Ascending aorta (tissue), 2 donors: ENCODE measurements at regions of chr15 and their contacts with region 1.

Region 1: DNA sequence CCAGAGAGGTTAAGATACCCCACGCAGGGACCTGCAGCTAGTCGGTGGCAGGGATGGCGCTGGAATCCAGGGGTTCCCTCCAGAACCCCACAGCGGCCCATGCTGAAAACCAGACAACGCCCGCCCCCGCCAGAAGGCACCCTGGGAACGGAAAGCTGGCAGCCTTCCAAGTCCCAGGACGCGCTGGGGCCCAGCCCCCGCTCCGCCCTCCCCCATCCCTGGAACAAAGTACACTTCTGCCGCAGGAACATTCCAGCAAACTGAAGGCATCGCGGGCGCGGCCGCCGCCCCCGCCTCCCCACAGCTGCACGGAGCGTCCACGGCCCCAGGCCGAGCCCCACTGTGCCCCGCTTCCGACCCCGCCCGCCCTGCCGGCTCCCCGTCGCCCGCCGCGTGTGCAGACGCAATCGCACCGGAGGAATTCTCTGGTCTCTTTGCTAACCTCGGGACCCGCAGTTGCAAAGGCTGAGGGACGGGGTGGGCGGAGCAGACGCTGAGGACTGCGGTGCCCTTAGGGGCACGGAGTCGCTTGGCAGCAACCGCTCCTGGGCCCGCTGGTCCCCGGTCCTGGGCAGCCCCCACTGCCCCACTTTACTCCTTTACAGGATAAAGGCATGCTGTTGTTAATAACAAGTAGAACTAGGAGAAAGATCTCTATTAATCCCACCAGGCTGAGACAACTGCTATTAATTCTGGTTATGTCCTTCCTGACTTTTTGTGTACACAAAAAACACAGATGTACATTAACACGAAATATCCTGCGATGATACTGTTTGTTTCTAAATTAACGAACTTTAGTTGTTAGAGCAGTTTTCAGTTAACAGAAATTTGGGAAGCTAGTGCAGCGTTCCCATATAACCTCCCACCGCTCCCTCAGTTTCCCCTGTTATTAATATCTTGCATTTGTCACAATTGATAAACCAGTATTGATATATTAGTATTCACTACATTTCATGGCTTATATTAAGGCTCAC is 45.0 kb upstream of the RNU6-1 start:
- DNase-seq: peak; percentile 30 to 88
- H3K4me3 ChIP-seq: peak overlapping the region; percentile 60 to 67
- H3K27ac ChIP-seq: peak overlapping the region; percentile 54 to 81
- H3K4me1 ChIP-seq: peaks cover 0 to 4% of the 10 kb centered on the region in 2 donors
- H3K27me3 ChIP-seq: no peaks in the 10 kb centered on the region
- CTCF ChIP-seq: no peak

Region 2: DNA sequence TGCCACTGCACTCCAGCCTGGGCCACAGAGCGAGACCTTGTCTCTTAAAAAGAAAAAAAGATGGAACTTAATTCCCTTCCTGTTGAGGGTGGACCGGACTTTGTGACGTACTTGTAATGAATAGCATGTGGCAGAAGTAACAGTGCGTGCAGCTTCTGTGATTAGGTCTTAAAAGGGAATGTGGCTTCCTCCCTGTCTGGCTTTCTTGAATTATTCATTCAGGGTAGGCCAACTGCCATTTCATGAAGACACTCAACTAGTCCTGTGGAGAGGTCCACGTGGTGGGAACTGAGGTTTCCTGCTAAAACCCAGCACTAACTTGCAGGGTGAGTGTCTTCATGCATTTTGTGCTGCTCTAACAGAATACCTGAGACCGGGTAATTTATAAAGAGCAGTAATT is 70.5 kb after region 1 on chr15:
- intact Hi-C with region 1: loop called (anchors 5 kb)
- DNase-seq: no peak
- H3K4me3 ChIP-seq: no peak overlapping the region
- H3K27ac ChIP-seq: peak overlapping the region; percentile 15 to 62
- H3K4me1 ChIP-seq: peaks cover 0 to 7% of the 10 kb centered on the region in 2 donors
- H3K27me3 ChIP-seq: no peaks in the 10 kb centered on the region
- CTCF ChIP-seq: no peak